ENCODE measurements at regions of chr6 and their contacts with region 1.

Region 1: DNA sequence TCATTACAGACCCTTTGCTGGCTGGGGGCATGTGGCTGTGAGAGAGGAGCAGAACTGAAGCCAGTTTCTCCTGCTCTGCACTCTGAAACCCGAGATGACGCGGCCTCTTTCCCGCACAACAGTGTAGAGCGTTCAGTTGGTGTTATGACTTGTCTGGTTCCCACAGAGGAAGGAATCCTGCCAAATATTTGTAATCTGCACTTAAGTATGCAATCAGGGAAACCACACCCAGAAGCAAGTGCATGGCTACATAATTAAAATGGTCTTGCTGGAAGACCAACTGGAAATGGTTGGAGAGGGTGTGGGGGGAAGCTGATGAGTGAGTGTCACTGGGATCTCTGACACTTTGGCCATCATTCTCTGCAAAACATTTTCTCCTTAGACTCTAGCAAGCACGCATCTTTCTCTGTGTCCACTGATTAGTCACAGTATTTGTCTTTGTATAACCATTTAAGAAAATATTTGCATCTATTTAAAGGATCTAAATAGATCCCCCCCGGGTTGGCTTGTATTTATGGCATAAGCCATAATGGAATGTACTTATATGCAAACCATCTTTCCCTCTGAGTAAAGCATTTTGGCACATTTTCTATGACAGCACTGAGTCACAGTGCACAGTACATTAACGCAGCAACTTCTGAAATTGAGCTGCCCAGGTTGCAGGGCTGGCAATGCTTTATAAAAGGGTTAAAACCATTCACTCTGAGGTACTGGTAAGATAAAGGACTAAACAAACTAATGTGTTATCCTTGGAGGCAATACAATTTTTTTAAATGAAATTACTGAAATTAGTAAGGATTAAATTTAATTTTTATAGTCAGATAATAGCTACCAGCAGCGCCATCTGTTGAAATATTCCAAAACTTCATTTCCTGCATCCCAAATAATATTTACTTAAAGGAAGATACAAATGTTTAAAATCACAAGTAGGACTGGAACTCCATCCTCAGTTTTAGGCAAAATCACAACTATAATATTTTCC is 76.7 kb downstream of the FOXC1 start:
- DNase-seq: no peak
- ATAC-seq: no peak
- H3K4me3 ChIP-seq: no peak overlapping the region
- H3K4me3 Mint-ChIP-seq: no peak overlapping the region
- H3K27ac ChIP-seq: no peak overlapping the region
- H3K27ac Mint-ChIP-seq: no peak overlapping the region
- H3K4me1 ChIP-seq: no peaks in the 10 kb centered on the region
- H3K4me1 Mint-ChIP-seq: no peaks in the 10 kb centered on the region
- H3K27me3 ChIP-seq: no peaks in the 10 kb centered on the region
- H3K27me3 Mint-ChIP-seq: no peaks in the 10 kb centered on the region
- CTCF ChIP-seq: no peak

Region 2: GRCh38 chr6:1670702-1671462 is 15.5 kb before region 1 on chr6:
- CTCF ChIA-PET with region 1: no interaction called
- POLR2A ChIA-PET with region 1: no interaction called
- intact Hi-C with region 1: no loop called
- DNase-seq: no peak
- ATAC-seq: no peak
- H3K4me3 ChIP-seq: no peak overlapping the region
- H3K4me3 Mint-ChIP-seq: no peak overlapping the region
- H3K27ac ChIP-seq: no peak overlapping the region
- H3K27ac Mint-ChIP-seq: no peak overlapping the region
- H3K4me1 ChIP-seq: no peaks in the 10 kb centered on the region
- H3K4me1 Mint-ChIP-seq: no peaks in the 10 kb centered on the region
- H3K27me3 ChIP-seq: no peaks in the 10 kb centered on the region
- H3K27me3 Mint-ChIP-seq: no peaks in the 10 kb centered on the region
- CTCF ChIP-seq: no peak

Region 3: DNA sequence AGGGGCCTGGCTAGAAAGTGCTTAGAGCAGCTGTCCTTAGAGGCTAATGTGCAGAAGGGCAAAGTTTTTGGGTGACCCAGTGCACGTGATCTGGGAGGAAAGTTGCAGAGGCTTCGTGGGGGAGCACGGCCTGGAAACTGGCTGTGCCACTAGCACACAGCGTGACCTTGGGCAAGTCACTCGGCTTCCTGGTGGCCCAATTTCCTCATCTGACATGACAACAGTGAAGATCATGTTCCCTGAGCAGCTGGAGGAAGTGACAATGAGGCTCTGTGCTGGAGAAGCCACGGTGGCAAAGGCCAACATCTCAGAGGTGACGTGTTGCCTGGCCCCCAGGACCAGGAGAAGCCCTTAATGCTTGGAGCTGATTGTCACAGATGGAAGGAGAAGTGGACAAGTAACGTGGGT is 22.8 kb after region 1 on chr6:
- CTCF ChIA-PET with region 1: no interaction called
- POLR2A ChIA-PET with region 1: no interaction called
- intact Hi-C with region 1: no loop called
- DNase-seq: no peak
- ATAC-seq: no peak
- H3K4me3 ChIP-seq: no peak overlapping the region
- H3K4me3 Mint-ChIP-seq: no peak overlapping the region
- H3K27ac ChIP-seq: no peak overlapping the region
- H3K27ac Mint-ChIP-seq: no peak overlapping the region
- H3K4me1 ChIP-seq: no peaks in the 10 kb centered on the region
- H3K4me1 Mint-ChIP-seq: no peaks in the 10 kb centered on the region
- H3K27me3 ChIP-seq: no peaks in the 10 kb centered on the region
- H3K27me3 Mint-ChIP-seq: no peaks in the 10 kb centered on the region
- CTCF ChIP-seq: no peak

Region 4: DNA sequence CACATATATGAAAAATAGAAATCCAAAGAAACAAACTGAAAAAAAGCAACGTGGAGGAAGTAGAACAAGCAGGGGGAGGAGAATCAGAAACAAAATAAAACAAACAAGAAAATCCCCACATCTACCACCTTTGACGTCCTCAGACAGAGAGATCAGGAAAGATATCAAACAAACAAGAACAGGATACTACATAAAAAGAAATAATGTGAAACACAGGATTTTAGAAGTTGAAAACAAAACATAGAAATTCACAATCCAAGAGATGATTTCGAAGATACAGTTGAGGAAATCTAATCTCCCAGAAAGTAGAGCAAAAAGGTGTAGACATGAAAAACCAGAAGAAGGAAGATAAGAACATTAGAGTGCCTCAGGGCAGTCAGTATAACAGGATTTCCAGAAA is 44.5 kb after region 1 on chr6:
- CTCF ChIA-PET with region 1: no interaction called
- POLR2A ChIA-PET with region 1: no interaction called
- intact Hi-C with region 1: loop called in 1 of 2 experiments (anchors 1 kb)
- DNase-seq: no peak
- ATAC-seq: no peak
- H3K4me3 ChIP-seq: no peak overlapping the region
- H3K4me3 Mint-ChIP-seq: no peak overlapping the region
- H3K27ac ChIP-seq: no peak overlapping the region
- H3K27ac Mint-ChIP-seq: no peak overlapping the region
- H3K4me1 ChIP-seq: no peaks in the 10 kb centered on the region
- H3K4me1 Mint-ChIP-seq: no peaks in the 10 kb centered on the region
- H3K27me3 ChIP-seq: no peaks in the 10 kb centered on the region
- H3K27me3 Mint-ChIP-seq: no peaks in the 10 kb centered on the region
- CTCF ChIP-seq: no peak

Region 5: DNA sequence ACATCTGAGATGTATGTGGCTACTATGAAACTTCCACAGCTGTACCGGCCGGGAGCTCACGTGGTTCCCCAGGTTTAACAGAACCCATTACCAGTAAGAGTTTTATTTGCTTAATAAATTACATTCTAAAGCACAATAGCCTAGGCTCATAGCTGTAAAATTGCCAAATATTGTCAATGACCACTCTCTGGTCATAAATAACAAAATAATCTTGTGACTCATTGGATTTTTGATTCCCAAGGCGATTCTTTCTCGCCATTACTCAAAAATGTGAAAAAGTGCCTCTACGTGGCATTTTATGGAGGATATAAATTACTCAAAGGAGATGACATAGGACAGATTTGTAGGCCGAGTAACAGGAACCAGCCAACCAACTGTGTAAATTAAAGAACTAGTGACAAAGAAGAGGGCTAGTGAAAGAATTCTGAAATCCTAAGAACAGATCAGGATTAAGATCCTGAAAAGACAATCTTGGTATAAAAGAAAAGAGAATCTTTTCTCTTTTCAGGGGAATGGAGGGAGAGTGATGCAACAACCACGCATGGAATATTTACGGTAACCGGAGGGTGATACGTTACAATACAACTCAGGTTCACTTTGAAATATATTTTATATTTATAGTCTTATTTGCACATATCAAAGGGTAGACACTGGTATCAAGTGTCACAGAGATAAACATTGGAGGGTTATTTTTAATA is 123.0 kb after region 1 on chr6:
- CTCF ChIA-PET with region 1: no interaction called
- POLR2A ChIA-PET with region 1: no interaction called
- intact Hi-C with region 1: no loop called
- DNase-seq: no peak
- ATAC-seq: no peak
- H3K4me3 ChIP-seq: no peak overlapping the region
- H3K4me3 Mint-ChIP-seq: no peak overlapping the region
- H3K27ac ChIP-seq: no peak overlapping the region
- H3K27ac Mint-ChIP-seq: no peak overlapping the region
- H3K4me1 ChIP-seq: no peaks in the 10 kb centered on the region
- H3K4me1 Mint-ChIP-seq: peaks cover 3% of the 10 kb centered on the region
- H3K27me3 ChIP-seq: no peaks in the 10 kb centered on the region
- H3K27me3 Mint-ChIP-seq: no peaks in the 10 kb centered on the region
- CTCF ChIP-seq: no peak